ENCODE measurements at regions of chr18 and their contacts with region 1.

Region 1: DNA sequence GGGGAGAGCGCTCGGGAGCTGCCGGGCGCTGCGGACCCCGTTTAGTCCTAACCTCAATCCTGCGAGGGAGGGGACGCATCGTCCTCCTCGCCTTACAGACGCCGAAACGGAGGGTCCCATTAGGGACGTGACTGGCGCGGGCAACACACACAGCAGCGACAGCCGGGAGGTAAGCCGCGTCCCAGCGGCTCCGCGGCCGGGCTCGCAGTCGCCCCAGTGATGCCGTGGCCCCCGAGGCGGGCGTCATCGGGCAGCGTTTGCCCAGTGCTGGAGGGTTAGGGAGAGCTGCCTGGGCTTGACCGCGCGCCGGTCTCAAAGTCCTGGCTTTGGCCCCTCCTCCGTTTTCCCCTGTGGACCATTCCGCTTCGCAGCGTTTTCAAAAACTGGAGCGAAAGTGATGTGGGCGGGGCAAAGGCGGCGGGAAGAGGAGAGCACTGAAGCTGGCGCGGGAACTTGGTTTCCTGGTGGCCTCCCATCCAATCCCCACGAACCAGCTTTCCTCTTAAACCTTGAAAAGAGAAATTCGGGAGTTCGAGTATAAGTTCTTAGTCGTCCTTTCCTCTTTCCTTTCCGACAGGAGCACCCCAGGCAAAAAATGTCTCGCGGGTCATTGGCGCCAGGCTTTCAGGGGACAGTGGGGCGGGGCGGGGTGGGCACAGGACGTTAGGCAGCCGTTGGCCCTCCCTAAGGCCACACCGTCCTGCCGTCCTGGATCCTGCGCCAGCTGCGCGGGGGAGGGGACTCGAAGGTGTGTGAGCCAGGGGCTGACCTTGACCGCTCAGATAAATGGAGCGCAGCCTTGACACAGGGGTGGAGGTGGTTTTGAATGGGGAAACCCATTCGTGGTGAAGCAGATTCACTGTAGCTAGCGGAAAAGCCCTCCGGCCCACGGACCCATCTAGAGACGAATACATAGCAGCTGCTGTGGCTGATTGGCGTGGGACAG is 821 bp downstream of the TYMS start:
- DNase-seq: peak; percentile 85
- H3K4me3 Mint-ChIP-seq: peak overlapping the region; percentile 97
- H3K27ac Mint-ChIP-seq: peak overlapping the region; percentile 95
- H3K4me1 Mint-ChIP-seq: peaks cover 53% of the 10 kb centered on the region
- H3K27me3 Mint-ChIP-seq: no peaks in the 10 kb centered on the region

Region 2: DNA sequence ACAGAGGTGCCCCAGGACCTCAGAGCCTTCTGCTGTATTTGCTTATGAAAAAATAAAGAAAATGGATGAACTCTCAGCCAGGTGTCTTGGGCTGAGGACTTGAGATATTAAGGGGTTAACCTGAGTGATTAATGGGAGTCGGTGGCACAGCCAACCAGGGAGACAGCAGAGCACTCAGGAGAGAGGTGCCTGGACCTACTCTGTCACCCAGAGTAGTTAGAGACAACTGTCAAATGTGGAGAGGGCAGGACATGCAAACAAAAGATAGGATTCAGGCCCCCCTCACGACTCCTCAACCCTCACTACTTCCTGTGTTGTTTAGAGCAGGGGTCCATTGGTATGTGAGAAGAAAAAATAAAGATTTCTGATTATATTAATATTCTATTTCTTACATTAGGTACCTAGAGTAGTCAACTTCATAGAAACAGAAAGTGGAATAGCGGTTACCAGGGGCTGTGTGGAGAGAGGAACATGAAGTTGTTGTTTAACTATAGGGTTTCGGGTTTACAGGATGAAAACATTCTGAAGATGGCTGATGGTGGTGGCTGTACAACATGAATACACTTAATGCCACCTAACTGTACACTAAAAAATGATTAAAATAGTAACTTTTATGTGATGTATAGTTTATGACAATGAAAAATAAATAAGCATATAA is 106.7 kb before region 1 on chr18:
- CTCF ChIA-PET with region 1: no interaction called
- POLR2A ChIA-PET with region 1: no interaction called
- DNase-seq: no peak
- H3K4me3 Mint-ChIP-seq: no peak overlapping the region
- H3K27ac Mint-ChIP-seq: no peak overlapping the region
- H3K4me1 Mint-ChIP-seq: no peaks in the 10 kb centered on the region
- H3K27me3 Mint-ChIP-seq: no peaks in the 10 kb centered on the region

Region 3: DNA sequence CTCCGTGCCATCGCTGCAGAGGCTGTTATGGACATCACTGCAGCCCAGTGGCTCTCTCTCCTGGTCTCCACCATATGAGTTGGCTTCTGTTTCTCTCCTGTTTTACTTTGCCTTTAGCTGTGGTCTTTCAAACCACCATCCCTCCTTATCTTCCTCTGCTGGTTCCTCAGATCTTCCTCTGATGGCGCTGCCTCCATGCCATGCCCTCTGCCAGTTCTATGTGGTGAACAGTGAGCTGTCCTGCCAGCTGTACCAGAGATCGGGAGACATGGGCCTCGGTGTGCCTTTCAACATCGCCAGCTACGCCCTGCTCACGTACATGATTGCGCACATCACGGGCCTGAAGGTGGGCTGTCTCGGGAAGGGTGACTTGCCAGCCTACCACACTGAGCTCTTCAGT is 12.2 kb after region 1 on chr18:
- CTCF ChIA-PET with region 1: interaction called, 10 read pairs
- POLR2A ChIA-PET with region 1: no interaction called
- DNase-seq: no peak
- H3K4me3 Mint-ChIP-seq: no peak overlapping the region
- H3K27ac Mint-ChIP-seq: no peak overlapping the region
- H3K4me1 Mint-ChIP-seq: peaks cover 25% of the 10 kb centered on the region
- H3K27me3 Mint-ChIP-seq: no peaks in the 10 kb centered on the region